Panc1 (cell line): ENCODE measurements at regions of chr6 and their contacts with region 1.

Region 1: DNA sequence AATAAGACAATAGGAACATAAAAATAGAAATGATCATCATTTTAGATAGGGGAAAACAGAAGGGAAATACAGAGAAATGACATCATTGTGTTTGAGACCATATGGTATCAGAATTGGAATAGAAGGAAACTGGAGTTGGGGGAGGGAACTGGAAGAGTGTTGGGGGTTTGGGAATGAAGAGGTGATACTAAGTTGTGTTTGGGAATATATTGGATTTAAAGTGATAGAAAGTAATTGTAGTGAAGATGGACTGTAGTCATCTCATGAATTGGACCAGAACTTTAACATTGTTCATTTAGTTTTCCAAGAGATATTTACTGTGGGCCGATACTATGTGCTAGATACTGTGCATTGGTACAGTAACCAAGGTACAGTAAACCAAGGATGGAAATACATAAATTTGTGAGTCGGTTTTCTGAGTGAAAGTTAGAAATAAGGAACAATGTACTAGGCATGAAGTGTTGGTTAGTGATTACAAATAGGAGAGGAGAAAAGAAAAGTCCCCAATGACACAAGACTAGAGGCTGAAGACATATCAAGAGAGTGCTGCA is 32.3 kb downstream of the KCNQ5 start:
- DNase-seq: no peak
- ATAC-seq: no peak
- H3K4me3 ChIP-seq: no peak overlapping the region
- H3K27ac ChIP-seq: no peak overlapping the region
- H3K4me1 ChIP-seq: peaks cover 23% of the 10 kb centered on the region; the same call in 1 of the 2 replicates
- H3K27me3 ChIP-seq: no peaks in the 10 kb centered on the region
- CTCF ChIP-seq: no peak

Region 2: GRCh38 chr6:72624557-72625160 is 29.5 kb before region 1 on chr6:
- CTCF ChIA-PET with region 1: no interaction called
- POLR2A ChIA-PET with region 1: no interaction called
- in situ Hi-C with region 1: no loop called
- intact Hi-C with region 1: no loop called
- DNase-seq: no peak
- ATAC-seq: no peak
- H3K4me3 ChIP-seq: no peak overlapping the region; a peak in 1 of 4 replicates
- H3K27ac ChIP-seq: no peak overlapping the region
- H3K4me1 ChIP-seq: peaks cover 28% of the 10 kb centered on the region
- H3K27me3 ChIP-seq: no peaks in the 10 kb centered on the region; the same call in 1 of the 2 replicates
- CTCF ChIP-seq: peak; percentile 82; the same call in 1 of the 2 replicates

Region 3: DNA sequence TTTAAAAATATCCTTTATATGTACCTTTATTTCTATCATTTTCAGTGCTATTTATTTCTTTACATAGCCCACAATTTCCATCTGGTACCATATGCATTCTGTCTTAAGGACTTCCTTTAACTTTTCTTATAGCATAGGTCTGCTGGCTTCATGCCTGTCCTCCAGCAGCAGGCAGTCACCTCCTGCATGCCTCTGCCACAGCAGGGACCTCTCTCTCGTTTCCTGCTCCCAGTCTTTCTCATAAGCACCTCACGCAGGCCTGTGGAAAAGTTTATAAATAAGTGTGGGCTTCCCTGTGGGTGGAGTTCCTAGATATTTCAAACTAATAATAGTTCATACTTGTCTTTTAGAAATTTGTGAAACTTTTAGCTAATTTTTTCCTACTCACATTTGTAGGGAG is 101.6 kb after region 1 on chr6:
- CTCF ChIA-PET with region 1: no interaction called
- POLR2A ChIA-PET with region 1: no interaction called
- in situ Hi-C with region 1: loop called (anchors 10 kb)
- intact Hi-C with region 1: no loop called
- DNase-seq: no peak
- ATAC-seq: no peak
- H3K4me3 ChIP-seq: no peak overlapping the region
- H3K27ac ChIP-seq: no peak overlapping the region
- H3K4me1 ChIP-seq: no peaks in the 10 kb centered on the region
- H3K27me3 ChIP-seq: no peaks in the 10 kb centered on the region
- CTCF ChIP-seq: no peak